Panc1 (cell line): ENCODE measurements at regions of chr11 and their contacts with region 1.

Region 1: GRCh38 chr11:71267807-71268421 is 15.5 kb upstream of the SHANK2 start:
- DNase-seq: no peak
- ATAC-seq: no peak
- H3K4me3 ChIP-seq: no peak overlapping the region
- H3K27ac ChIP-seq: no peak overlapping the region
- H3K4me1 ChIP-seq: no peaks in the 10 kb centered on the region
- H3K27me3 ChIP-seq: no peaks in the 10 kb centered on the region
- CTCF ChIP-seq: no peak

Region 2: GRCh38 chr11:71103266-71103665 is 164.6 kb before region 1 on chr11:
- CTCF ChIA-PET with region 1: no interaction called
- POLR2A ChIA-PET with region 1: interaction called, 16 read pairs
- in situ Hi-C with region 1: no loop called
- intact Hi-C with region 1: no loop called
- DNase-seq: no peak
- ATAC-seq: no peak
- H3K4me3 ChIP-seq: no peak overlapping the region
- H3K27ac ChIP-seq: no peak overlapping the region
- H3K4me1 ChIP-seq: no peaks in the 10 kb centered on the region
- H3K27me3 ChIP-seq: no peaks in the 10 kb centered on the region; the same call in 1 of the 2 replicates
- CTCF ChIP-seq: no peak

Region 3: GRCh38 chr11:71342951-71343827 is 75.3 kb after region 1 on chr11:
- CTCF ChIA-PET with region 1: no interaction called
- POLR2A ChIA-PET with region 1: no interaction called
- in situ Hi-C with region 1: no loop called
- intact Hi-C with region 1: no loop called
- DNase-seq: no peak
- ATAC-seq: peak; percentile 83
- H3K4me3 ChIP-seq: no peak overlapping the region
- H3K27ac ChIP-seq: no peak overlapping the region
- H3K4me1 ChIP-seq: no peaks in the 10 kb centered on the region
- H3K27me3 ChIP-seq: peaks cover 6% of the 10 kb centered on the region
- CTCF ChIP-seq: no peak; the same call in 1 of the 2 replicates